ENCODE measurements at regions of chr1 and their contacts with region 1.

Region 1: GRCh38 chr1:32650752-32651460 is at the start of gene RBBP4:
- DNase-seq: peak; percentile 99
- H3K4me3 ChIP-seq: peak within 1 kb of the TSS; percentile 63 to 77 (median 70)
- H3K27ac ChIP-seq: peak within 1 kb of the TSS; percentile 94 to 99 (median 97)
- H3K4me1 ChIP-seq: peaks cover 0 to 62% (median 41%) of the 10 kb centered on the region in 4 donors
- H3K27me3 ChIP-seq: no peaks in the 10 kb centered on the region
- CTCF ChIP-seq: peak in 1 of 4 experiments; percentile 18
- EP300 ChIP-seq: peak in 1 of 4 donors; percentile 38
- POLR2A ChIP-seq: peak; percentile 86 to 88
- total RNA-seq, gene RBBP4: 91.8 to 118 (median 108) TPM

Region 2: GRCh38 chr1:32500387-32501209 is 150.3 kb before region 1 on chr1:
- intact Hi-C with region 1: loop called (anchors 5 kb)
- DNase-seq: peak; percentile 84
- H3K4me3 ChIP-seq: peak overlapping the region; percentile 33 to 96 (median 87)
- H3K27ac ChIP-seq: peak overlapping the region; percentile 92 to 99 (median 98)
- H3K4me1 ChIP-seq: peaks cover 0 to 37% (median 14%) of the 10 kb centered on the region in 4 donors
- H3K27me3 ChIP-seq: no peaks in the 10 kb centered on the region
- CTCF ChIP-seq: no peak
- EP300 ChIP-seq: no peak
- POLR2A ChIP-seq: no peak

Region 3: GRCh38 chr1:32702599-32703478 is 51.9 kb after region 1 on chr1 and contains the start of gene SYNC:
- intact Hi-C with region 1: loop called (anchors 5 kb)
- DNase-seq: peak; percentile 78
- H3K4me3 ChIP-seq: peak within 1 kb of the TSS; percentile 60 to 87 (median 74)
- H3K27ac ChIP-seq: peak within 1 kb of the TSS; percentile 86 to 95 (median 93)
- H3K4me1 ChIP-seq: peaks cover 0 to 59% (median 46%) of the 10 kb centered on the region in 4 donors
- H3K27me3 ChIP-seq: no peaks in the 10 kb centered on the region
- CTCF ChIP-seq: no peak
- EP300 ChIP-seq: no peak
- POLR2A ChIP-seq: peak in 1 of 2 donors; percentile 65
- total RNA-seq, gene SYNC: 22.5 to 87.5 (median 33.8) TPM

Region 4: DNA sequence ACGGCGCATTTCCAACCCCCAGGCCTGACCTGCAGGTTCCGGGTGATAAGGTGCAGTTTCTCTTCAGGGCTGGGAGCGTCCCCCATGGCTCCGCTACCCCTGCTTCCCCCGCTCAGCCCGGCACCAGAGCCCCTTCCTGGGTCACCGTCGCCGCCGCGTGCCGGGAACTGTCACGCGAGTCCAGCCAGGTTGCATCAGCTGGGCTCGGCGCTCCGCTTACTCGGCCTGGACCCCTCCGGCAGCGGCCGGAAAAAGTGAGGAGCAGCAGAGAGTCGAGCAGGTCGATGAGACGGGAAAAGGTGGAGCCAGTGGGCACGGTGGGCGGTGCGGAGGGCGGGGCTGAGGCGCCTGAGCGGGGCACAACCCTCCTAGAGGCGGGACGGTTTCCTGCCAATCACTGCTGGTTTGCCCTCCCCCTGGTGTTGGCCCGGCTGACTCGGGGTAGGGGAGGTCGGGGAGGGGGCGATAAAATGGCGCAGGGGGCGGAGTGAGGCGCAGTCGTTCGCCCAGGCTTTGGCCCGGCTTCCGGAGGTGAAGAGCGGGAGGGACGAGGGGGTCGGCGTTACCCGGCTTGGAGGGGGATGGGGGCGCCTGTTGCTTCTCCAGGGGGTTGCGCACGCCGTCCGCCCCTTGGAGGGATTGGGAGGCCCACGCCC is 166.4 kb after region 1 on chr1 and contains the starts of genes S100PBP and YARS1:
- intact Hi-C with region 1: loop called (anchors 2 kb)
- DNase-seq: peak; percentile 99
- H3K4me3 ChIP-seq: peak within 1 kb of the TSS; percentile 75 to 95 (median 88)
- H3K27ac ChIP-seq: peak within 1 kb of the TSS; percentile 96 to 100 (median 97)
- H3K4me1 ChIP-seq: peaks cover 0 to 56% (median 45%) of the 10 kb centered on the region in 4 donors
- H3K27me3 ChIP-seq: no peaks in the 10 kb centered on the region
- CTCF ChIP-seq: no peak
- EP300 ChIP-seq: peak in 2 of 4 donors; percentile 34 to 85
- POLR2A ChIP-seq: peak; percentile 27 to 57
- total RNA-seq, gene S100PBP: 25.2 to 50.7 (median 28.9) TPM
- total RNA-seq, gene YARS1: 29.6 to 46.8 (median 37.6) TPM

Measured in sigmoid colon (tissue), 7 donors.